ENCODE measurements at regions of chr1 and their contacts with region 1.

Region 1: GRCh38 chr1:36385410-36386257 is at the start of gene STK40:
- DNase-seq: peak; percentile 96

Region 2: DNA sequence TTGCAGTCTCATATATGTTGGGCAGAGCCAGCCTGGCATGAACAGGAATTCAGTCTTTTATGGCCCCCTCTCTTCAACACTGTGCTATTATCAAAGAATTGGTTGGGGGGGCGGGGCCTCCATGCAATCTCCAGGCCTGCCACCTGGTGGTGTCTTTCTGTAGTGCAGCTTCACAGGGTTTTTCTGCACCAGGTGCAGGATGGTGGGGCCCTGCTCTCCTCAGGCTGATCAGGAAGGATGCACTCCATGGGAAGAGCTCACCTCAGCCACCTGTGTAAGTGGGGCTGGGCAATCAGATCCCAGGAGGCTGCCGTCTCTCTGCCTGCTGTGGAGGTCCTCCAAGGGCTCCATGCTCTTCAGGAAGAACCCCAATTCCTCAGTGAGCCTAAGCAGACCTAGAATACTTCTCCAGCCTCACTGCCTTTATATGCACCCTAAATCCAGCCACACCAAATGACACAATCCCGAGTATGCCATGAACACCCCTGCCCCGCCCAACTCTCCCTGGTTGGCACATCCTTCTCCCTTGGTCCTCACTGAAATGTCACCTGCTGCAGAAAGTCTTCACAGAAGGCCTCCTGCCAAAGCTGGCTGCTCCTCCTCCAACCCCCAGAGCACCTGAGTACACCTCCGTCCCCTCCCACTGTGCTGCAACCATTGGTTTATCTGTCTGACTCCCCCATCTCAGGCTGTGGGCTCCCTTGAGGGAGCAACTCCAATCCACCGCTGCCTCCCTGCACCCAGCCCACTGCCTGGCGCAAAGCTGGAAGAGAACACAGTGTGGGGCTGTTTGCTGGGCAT is 16.4 kb before region 1 on chr1:
- CTCF ChIA-PET with region 1: interaction called, 7 read pairs
- POLR2A ChIA-PET with region 1: interaction called, 14 read pairs
- DNase-seq: peak; percentile 85

Region 3: GRCh38 chr1:36397378-36398230 is 12.0 kb after region 1 on chr1 and contains the start of gene LSM10:
- CTCF ChIA-PET with region 1: interaction called, 5 read pairs
- POLR2A ChIA-PET with region 1: interaction called, 147 read pairs
- DNase-seq: peak; percentile 95

Region 4: DNA sequence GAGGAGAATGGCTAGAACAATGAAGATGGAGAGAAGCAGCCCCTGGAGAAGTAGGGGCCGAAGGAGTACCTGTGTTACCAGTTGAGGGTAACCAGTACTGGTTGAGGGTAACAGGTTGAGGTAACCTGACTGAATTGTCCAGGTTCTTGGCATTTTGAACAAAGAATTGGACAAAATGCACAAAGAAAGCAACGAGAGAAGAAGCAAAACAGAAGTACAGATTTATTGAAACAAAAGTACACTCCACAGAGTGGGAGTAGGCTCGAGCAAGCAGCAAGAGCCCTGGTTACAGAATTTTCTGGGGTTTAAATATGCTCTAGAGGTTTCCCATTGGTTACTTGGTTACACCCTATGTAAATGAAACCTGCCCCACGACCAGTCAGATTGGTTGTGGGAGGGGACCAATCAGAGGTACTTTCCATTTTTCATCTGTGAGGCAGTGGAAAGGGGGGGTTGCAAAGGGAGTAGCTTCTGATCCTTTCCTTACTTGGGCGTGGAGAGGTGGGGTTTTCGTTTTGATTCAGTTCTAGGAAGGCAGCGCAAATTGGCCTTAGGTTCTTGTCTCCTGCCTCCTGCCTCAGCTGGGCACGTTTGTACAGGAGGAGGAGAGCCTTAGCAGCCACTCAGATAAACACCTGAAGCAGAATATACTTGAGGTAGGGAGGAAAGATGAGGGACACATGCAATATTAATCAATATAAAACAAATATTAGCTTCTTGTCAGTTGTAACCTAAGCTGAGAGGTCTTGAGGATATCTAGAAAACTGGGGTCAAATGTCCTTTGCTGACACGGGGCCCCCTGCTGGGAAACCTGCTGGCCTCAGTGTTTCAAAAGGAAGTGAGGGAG is 26.3 kb after region 1 on chr1:
- CTCF ChIA-PET with region 1: interaction called, 5 read pairs
- POLR2A ChIA-PET with region 1: interaction called, 12 read pairs
- DNase-seq: peak; percentile 18

Region 5: DNA sequence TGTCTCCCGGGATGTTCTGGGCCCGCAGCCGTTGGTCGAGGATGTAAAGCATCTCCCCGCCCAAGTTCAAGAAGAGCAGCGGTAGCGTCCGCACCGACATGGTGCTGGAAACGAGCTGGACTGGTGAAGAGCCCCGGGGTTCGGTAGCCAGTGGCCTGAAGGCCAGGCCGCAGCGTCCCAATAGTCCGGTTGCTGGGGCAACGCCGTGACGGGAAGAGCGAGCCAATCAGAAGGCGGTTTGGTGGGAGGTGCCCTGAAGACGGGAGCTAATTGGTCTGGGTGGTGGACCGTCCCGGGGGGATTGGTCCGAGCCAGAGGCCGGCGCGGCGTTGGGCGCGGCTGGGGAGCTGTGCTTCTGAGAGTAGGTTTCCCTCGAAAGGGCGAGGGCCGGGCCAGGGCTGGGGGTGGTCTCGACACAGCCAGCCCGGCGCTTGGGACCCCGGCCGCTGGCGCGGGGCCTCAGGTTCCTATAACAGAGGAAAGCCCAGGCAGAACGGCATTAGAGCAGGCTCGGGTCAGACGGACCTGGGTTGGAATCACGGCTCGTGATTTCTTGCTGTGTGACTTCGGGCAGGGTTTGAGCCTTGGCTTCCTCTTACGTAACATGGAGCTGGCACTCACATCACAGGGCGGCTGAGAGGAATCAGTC is 64.8 kb after region 1 on chr1 and contains the start of gene OSCP1:
- CTCF ChIA-PET with region 1: no interaction called
- POLR2A ChIA-PET with region 1: interaction called, 13 read pairs
- DNase-seq: peak; percentile 98

Region 6: DNA sequence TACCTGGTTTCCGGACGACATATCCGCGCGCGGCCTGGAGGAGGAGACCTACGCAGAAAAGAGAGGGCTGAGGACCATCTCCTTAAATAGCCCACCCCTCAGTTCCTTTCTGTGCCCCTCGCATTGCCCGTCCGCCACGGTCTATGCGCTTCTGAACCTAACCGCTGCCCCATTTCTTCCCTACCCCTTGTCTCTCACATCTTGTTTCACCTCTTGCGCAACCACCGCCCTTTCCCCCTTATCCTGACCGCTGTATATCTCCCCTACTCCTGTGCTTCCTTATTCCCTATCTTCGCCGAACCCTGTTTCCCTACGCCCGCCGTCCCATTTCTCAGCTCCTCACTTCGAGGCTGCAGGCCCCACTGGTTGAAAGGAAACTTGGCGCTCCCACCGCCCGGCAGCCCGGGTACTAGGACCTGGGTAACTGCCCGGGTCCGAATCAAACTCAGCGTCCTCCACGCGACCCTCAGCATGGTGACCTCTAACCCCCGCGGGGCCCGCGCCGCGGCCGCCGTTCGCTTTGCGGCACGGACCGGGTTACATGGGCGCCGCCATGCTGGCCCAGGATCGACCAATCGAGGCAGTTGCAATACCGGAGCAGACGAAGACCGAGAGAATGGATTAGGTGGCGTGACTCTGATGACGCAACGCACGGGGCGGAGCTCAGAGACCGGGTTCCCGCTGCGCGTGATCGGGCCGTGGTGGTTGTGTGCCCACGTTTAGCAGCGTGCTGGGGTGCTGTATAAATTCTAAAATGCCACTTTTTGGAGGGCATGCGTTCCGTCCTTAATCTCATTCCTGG is 78.4 kb after region 1 on chr1 and contains the start of gene MRPS15:
- CTCF ChIA-PET with region 1: no interaction called
- POLR2A ChIA-PET with region 1: interaction called, 14 read pairs
- DNase-seq: peak; percentile 94

Measured in HEK293T (cell line).